Left lung (tissue), 14 donors: ENCODE measurements at regions of chr4 and their contacts with region 1.

Region 1: DNA sequence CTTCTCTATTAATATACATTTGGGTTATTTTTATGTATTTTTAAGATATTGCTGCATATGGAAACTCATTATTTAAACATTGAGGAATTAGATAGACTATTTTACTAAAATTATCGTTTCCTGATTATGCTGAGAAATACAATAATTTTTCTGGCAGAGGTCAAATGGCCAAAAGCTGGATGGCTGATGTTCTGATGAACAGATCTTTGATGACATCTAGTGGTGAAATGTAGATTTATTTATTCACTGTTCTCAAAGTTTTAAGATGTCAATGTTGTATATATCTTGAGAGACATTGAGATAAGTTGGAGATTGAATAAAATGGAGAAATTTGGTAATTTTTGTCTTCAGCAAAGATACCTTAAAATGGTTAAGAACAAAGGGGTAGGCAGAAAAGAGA is 96.2 kb downstream of the UGT8 start:
- DNase-seq: peak in 1 of 4 donors; percentile 31
- ATAC-seq: no peak
- H3K4me3 ChIP-seq: no peak overlapping the region
- H3K27ac ChIP-seq: no peak overlapping the region
- H3K4me1 ChIP-seq: no peaks in the 10 kb centered on the region
- H3K27me3 ChIP-seq: no peaks in the 10 kb centered on the region
- CTCF ChIP-seq: peak in 1 of 2 donors; percentile 45

Region 2: DNA sequence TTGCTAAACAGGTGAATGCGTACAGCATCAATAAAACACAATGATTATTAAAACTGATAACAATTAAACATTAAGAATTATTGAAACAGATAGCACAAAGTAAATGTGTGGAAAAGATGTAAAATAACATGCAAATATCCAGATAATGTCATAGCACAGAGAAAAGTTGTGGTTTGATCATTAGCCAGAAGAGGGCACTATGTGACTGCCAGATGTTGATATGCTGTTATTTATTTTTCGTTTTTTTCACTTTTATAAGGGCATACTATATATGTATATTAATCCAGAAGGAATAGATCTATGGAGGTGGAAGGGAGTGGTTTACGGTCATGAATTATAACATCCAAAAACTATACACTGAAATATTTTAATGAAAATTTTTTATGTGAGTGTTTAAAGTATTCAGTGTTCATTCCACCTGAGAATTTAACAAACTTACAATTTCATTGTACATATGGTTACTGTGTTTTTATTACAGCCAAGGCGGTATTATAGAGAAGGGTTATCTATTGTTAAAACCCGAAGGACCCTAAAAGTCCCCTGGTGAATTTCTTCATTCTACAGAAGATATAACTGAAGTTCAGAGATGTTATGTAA is 308.0 kb before region 1 on chr4:
- intact Hi-C with region 1: loop called in 1 of 2 experiments (anchors 5 kb)
- DNase-seq: peak in 2 of 4 donors; percentile 29 to 42
- ATAC-seq: peak; percentile 60
- H3K4me3 ChIP-seq: peak overlapping the region in 1 of 2 donors; percentile 1
- H3K27ac ChIP-seq: no peak overlapping the region
- H3K4me1 ChIP-seq: no peaks in the 10 kb centered on the region
- H3K27me3 ChIP-seq: no peaks in the 10 kb centered on the region
- CTCF ChIP-seq: peak; percentile 38 to 61

Region 3: DNA sequence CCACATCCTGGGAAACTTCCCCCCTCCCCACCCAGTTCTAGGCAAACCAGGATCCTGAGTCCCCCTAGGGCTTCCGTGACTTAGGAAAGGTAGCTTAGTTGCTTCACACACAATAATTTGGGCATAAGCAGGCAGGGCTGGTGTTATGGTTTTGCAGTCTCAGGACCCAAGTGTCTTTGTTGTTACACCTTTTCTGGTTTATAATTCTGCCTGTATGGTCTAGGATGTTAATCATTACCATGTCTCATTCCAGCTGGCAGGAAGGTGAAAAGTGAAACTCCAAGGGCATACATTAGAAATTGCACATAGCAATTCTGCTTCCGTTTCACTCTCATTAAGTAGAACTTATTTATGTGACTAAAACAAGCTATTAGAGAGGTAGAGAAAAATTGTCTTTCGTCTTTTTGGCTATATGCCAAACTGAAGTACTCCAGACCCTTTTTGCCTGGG is 79.3 kb before region 1 on chr4:
- intact Hi-C with region 1: no loop called
- DNase-seq: peak in 2 of 4 donors; percentile 8 to 41
- ATAC-seq: peak; percentile 89
- H3K4me3 ChIP-seq: peak overlapping the region; percentile 8 to 23
- H3K27ac ChIP-seq: peak overlapping the region in 1 of 2 donors; percentile 50
- H3K4me1 ChIP-seq: no peaks in the 10 kb centered on the region
- H3K27me3 ChIP-seq: no peaks in the 10 kb centered on the region
- CTCF ChIP-seq: no peak

Region 4: DNA sequence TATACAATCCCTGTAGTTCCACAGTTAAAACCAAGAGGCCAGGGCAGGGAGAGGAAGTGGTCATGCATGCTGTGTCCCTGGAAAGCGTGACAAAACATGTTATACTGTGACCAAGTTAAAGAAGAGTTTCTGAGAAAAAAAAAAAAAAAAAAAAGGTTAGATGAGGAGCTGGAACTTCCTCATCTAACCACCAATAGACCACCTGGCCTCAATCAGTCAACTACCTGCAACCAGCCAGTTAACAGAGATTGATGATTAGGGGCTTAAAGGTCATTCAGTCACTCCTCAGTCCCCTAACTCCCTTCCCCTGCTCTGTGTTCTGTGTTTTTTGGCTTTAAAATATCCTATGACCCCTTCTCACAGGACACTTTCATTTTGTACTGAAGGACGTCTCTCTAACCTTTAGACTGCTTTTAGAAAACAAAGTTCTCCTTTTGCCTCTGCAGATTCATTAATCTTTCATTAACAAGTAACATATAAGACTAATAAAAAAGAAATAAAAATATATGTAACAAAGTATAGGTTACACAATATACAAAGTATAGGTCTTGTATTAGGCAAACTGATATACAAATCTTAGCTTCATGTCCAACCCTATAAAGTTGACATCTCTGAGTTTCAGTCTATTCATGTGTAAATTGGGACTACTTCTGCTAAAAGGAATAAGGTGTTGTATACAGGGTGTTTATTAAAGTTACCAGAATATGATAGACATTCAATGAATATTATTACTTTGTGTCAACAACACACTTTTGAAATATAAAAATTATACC is 597.7 kb after region 1 on chr4:
- intact Hi-C with region 1: no loop called
- DNase-seq: no peak
- ATAC-seq: no peak
- H3K4me3 ChIP-seq: no peak overlapping the region
- H3K27ac ChIP-seq: no peak overlapping the region
- H3K4me1 ChIP-seq: no peaks in the 10 kb centered on the region
- H3K27me3 ChIP-seq: no peaks in the 10 kb centered on the region
- CTCF ChIP-seq: no peak